ENCODE measurements at regions of chr2 and their contacts with region 1.

Region 1: DNA sequence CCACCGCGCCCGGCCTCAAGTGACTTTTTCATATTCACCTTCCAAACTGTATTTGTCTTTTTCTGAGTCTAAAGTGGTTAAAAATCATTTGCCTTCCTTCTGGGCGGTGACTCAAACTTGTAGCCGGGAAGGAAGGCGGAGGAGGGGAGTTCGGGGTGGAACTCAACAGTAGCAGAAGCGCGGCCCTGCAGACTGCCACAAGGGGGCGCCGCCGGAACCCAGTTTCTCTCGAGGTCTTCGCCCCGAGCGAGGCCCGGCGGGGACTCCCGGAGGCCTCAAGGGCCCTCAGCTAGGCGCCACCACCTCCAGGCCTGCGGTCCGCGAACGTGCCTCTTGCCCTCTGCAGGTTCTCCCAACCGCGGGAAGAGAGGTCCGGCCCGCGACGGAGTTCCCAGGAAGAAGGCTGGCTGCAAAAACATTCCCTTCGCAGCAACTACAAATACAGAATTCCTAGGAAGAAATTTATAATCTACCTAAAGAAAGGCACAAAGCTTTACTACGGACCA is 16.8 kb upstream of the ITM2C start:
- DNase-seq: peak; percentile 97
- ATAC-seq: peak; percentile 97
- H3K4me3 Mint-ChIP-seq: no peak overlapping the region
- H3K27ac Mint-ChIP-seq: no peak overlapping the region
- H3K4me1 Mint-ChIP-seq: peaks cover 10% of the 10 kb centered on the region
- H3K27me3 Mint-ChIP-seq: peaks cover 21% of the 10 kb centered on the region
- CTCF ChIP-seq: peak; percentile 96

Region 2: DNA sequence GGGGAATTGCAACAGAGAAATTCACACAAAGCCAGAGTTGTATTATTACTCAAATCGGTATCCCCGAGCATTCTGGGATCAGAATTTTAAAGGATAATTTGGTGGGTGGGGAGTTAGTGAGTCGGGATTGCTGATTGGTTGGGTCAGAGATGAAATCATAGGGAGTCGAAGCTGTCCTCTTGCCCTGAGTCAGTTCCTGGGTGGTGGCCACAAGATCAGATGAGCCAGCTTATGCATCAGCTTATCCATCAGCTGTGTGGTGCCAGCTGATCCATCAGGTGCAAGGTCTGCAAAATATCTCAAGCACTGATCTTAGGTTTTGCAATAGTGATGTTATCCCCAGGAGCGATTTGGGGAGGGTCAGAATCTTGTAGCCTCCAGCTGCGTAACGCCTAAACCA is 17.5 kb before region 1 on chr2:
- CTCF ChIA-PET with region 1: interaction called, 49 read pairs
- POLR2A ChIA-PET with region 1: interaction called, 3 read pairs
- intact Hi-C with region 1: no loop called
- DNase-seq: peak; percentile 55
- ATAC-seq: no peak
- H3K4me3 Mint-ChIP-seq: no peak overlapping the region
- H3K27ac Mint-ChIP-seq: no peak overlapping the region
- H3K4me1 Mint-ChIP-seq: no peaks in the 10 kb centered on the region
- H3K27me3 Mint-ChIP-seq: peaks cover 40% of the 10 kb centered on the region
- CTCF ChIP-seq: no peak

Region 3: DNA sequence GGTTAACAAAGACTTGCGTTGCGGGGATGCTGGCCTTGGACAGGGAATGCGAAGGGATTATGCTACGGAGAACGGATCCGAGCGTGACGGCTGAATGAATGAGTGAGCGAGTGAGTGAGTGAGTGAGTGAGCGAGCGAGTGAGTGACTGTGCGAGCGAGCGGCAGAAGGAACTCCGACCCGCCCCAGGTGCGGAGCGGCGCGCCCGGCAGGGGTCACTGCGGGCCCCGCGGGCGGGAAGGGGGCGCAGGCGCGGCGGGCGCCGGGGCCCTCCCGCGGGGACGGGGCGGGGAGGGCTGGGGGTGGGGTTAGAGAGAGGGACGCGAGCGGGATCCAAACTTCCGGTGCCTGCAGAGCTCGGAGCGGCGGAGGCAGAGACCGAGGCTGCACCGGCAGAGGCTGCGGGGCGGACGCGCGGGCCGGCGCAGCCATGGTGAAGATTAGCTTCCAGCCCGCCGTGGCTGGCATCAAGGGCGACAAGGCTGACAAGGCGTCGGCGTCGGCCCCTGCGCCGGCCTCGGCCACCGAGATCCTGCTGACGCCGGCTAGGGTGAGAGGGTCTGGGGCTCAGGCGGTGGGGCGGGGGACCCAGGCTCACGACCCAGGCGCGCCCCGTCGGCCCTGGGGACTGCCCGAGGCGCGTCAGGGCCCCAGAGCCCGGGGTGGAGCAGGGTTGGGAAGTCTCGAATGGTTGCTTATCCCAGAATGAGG is 16.8 kb after region 1 on chr2 and contains the start of gene ITM2C:
- CTCF ChIA-PET with region 1: interaction called, 17 read pairs
- POLR2A ChIA-PET with region 1: interaction called, 3 read pairs
- intact Hi-C with region 1: no loop called
- DNase-seq: peak; percentile 82
- ATAC-seq: peak; percentile 85
- H3K4me3 Mint-ChIP-seq: peak within 1 kb of the TSS; percentile 73
- H3K27ac Mint-ChIP-seq: peak within 1 kb of the TSS; percentile 55
- H3K4me1 Mint-ChIP-seq: peaks cover 50% of the 10 kb centered on the region
- H3K27me3 Mint-ChIP-seq: peaks cover 2% of the 10 kb centered on the region
- CTCF ChIP-seq: peak; percentile 13
- total RNA-seq, gene ITM2C: 43.2 to 43.4 TPM

Region 4: GRCh38 chr2:230877732-230878598 is 30.0 kb after region 1 on chr2:
- CTCF ChIA-PET with region 1: interaction called, 13 read pairs
- POLR2A ChIA-PET with region 1: no interaction called
- intact Hi-C with region 1: no loop called
- DNase-seq: peak; percentile 88
- ATAC-seq: peak; percentile 90
- H3K4me3 Mint-ChIP-seq: peak overlapping the region; percentile 33
- H3K27ac Mint-ChIP-seq: peak overlapping the region; percentile 92
- H3K4me1 Mint-ChIP-seq: peaks cover 52% of the 10 kb centered on the region
- H3K27me3 Mint-ChIP-seq: no peaks in the 10 kb centered on the region
- CTCF ChIP-seq: no peak

Region 5: DNA sequence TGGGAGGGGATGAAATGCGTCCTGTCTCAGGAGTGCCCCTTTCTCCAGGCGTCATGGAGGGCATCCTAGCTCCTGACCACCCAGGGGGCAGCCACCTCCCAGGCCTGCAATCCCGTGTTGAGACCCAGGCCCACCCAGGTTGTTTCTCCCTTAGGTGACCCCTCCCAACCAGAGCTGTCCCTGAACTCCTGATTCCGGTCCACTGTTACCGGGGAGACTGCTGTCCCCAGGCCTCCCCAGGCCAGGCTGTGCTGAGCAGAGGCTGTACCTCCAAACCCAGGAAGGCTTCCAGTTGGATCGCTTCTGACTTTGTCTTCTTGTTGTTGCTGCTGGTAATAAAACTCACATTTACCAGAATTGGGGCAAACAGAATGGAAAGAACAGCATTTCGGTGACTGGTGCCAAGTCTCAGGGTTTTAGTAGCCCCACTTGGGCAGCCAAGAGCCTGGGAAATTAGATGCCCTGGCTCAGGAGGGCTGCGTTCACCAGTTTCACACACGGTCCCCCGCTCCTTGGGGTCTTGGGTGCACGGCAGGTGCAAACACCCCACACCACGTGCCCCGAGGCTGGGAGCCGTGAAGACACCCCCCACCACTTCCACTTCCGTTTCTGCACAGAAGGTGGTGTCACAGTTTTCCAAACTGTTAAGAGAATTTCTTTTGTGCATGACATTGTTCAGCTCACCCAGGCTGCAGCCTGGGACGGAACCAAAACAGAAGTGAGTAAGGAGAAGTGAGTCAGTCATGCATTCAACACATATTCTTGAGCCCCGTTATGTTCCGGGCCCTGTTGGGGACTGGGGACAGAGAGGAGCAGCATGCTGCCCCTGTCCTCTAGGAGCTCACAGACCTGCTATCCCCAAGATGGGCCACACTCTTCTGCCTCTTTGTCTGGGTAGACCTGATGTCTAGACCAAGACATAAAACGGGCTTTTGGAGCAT is 46.2 kb after region 1 on chr2:
- CTCF ChIA-PET with region 1: interaction called, 24 read pairs
- POLR2A ChIA-PET with region 1: no interaction called
- intact Hi-C with region 1: no loop called
- DNase-seq: no peak
- ATAC-seq: peak; percentile 63
- H3K4me3 Mint-ChIP-seq: no peak overlapping the region
- H3K27ac Mint-ChIP-seq: no peak overlapping the region
- H3K4me1 Mint-ChIP-seq: peaks cover 24% of the 10 kb centered on the region
- H3K27me3 Mint-ChIP-seq: no peaks in the 10 kb centered on the region
- CTCF ChIP-seq: no peak

Region 6: GRCh38 chr2:230942920-230943896 is 95.3 kb after region 1 on chr2:
- CTCF ChIA-PET with region 1: no interaction called
- POLR2A ChIA-PET with region 1: no interaction called
- intact Hi-C with region 1: no loop called
- DNase-seq: peak; percentile 86
- ATAC-seq: peak; percentile 86
- H3K4me3 Mint-ChIP-seq: peak overlapping the region; percentile 62
- H3K27ac Mint-ChIP-seq: peak overlapping the region; percentile 70
- H3K4me1 Mint-ChIP-seq: peaks cover 33% of the 10 kb centered on the region
- H3K27me3 Mint-ChIP-seq: no peaks in the 10 kb centered on the region
- CTCF ChIP-seq: no peak

Region 7: DNA sequence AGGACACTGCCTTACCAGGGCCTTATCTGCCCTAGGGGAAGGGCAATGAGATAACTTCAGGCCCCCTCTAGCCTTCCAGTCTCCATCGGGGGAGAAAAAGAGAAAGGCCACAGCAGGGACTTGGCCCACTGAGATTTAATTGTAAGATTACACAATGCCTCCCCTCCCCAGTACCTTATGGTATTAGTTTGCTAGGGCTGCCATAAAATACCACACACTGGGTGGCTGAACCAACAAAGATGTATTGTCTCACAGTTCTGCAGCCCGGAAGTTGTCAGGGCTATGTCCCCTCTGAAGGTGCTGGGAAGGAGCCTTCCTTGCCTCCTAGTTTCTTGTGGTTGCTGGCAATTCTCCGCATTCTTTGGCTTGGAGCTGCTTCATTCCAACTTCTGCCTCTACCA is 113.2 kb after region 1 on chr2:
- CTCF ChIA-PET with region 1: no interaction called
- POLR2A ChIA-PET with region 1: no interaction called
- intact Hi-C with region 1: no loop called
- DNase-seq: no peak
- ATAC-seq: no peak
- H3K4me3 Mint-ChIP-seq: no peak overlapping the region
- H3K27ac Mint-ChIP-seq: no peak overlapping the region
- H3K4me1 Mint-ChIP-seq: peaks cover 30% of the 10 kb centered on the region
- H3K27me3 Mint-ChIP-seq: peaks cover 22% of the 10 kb centered on the region
- CTCF ChIP-seq: no peak

Region 8: GRCh38 chr2:231099918-231100317 is 252.0 kb after region 1 on chr2:
- CTCF ChIA-PET with region 1: no interaction called
- POLR2A ChIA-PET with region 1: no interaction called
- intact Hi-C with region 1: no loop called
- DNase-seq: peak; percentile 43
- ATAC-seq: no peak
- H3K4me3 Mint-ChIP-seq: no peak overlapping the region
- H3K27ac Mint-ChIP-seq: no peak overlapping the region
- H3K4me1 Mint-ChIP-seq: peaks cover 8% of the 10 kb centered on the region
- H3K27me3 Mint-ChIP-seq: no peaks in the 10 kb centered on the region
- CTCF ChIP-seq: no peak